Aorta (tissue), 5 donors: ENCODE measurements at regions of chr5 and their contacts with region 1.

Region 1: GRCh38 chr5:144203750-144204596 is 33.3 kb downstream of the KCTD16 start:
- DNase-seq: no peak
- ATAC-seq: peak; percentile 81
- H3K4me3 ChIP-seq: no peak overlapping the region
- H3K27ac ChIP-seq: no peak overlapping the region
- H3K4me1 ChIP-seq: no peaks in the 10 kb centered on the region
- H3K27me3 ChIP-seq: no peaks in the 10 kb centered on the region

Region 2: GRCh38 chr5:143938230-143938629 is 265.7 kb before region 1 on chr5:
- intact Hi-C with region 1: no loop called
- DNase-seq: no peak
- ATAC-seq: no peak
- H3K4me3 ChIP-seq: no peak overlapping the region
- H3K27ac ChIP-seq: no peak overlapping the region
- H3K4me1 ChIP-seq: no peaks in the 10 kb centered on the region
- H3K27me3 ChIP-seq: no peaks in the 10 kb centered on the region

Region 3: GRCh38 chr5:146049014-146049703 is 1845.2 kb after region 1 on chr5:
- intact Hi-C with region 1: loop called (anchors 10 kb)
- DNase-seq: no peak
- ATAC-seq: no peak
- H3K4me3 ChIP-seq: no peak overlapping the region
- H3K27ac ChIP-seq: no peak overlapping the region
- H3K4me1 ChIP-seq: no peaks in the 10 kb centered on the region
- H3K27me3 ChIP-seq: no peaks in the 10 kb centered on the region